Activated T-helper 1 cell treated with anti-CD3 and anti-CD28 coated beads, Interleukin-12 subunit alpha, Interleukin-12 subunit beta, Interleukin-2, Interleukin-4 antibody, amounts not matched to agents 30 ng/mL and 10 ng/mL and 1 ng/mL, durations not matched to agents 14 hours and 24 hours and 36 hours (primary cell): ENCODE measurements at regions of chr6 and their contacts with region 1.

Region 1: GRCh38 chr6:43174263-43175112 is 3.4 kb downstream of the SRF start:
- DNase-seq: peak; percentile 96
- H3K4me3 Mint-ChIP-seq: peak overlapping the region; percentile 94
- H3K27ac Mint-ChIP-seq: peak overlapping the region; percentile 82
- H3K4me1 Mint-ChIP-seq: peaks cover 44% of the 10 kb centered on the region
- H3K27me3 Mint-ChIP-seq: peaks cover 2% of the 10 kb centered on the region

Region 2: DNA sequence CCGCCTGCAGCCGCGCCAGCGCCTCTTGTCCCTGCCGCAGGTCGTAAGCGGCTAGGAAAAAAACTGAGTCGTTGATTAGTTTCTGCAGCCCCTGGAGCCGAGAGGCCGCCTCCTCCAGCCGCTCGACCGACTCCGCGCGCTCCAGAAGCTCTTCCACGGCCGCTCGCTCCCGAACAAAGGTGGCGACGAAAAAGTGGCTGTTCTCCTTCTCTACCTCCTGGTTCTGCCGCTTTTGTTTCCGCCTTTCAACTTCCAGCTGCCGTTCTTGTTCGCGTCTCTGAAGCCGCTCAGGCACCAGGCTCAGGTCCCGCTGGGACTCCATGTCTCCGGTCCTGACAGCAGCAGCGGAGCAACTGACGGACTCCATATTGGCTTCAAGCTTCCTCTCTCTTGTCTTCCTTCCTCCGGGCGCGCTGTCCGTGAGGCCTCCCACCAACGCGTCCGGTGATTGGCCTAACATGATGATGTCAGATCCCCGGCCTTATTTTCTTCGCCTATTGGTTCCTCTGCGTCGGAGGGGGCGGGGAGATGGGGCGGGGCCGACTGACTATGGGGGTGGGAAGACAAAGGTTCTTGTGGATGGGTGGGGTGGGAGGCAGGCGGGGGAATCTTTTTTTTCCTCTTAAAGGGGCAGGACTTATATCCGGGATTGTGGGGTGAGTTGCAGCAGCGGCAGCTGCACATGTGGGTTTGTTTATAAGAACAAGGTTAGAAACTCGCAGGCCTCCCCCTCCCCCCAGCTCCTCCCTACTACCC is 428.6 kb before region 1 on chr6 and contains the start of gene TBCC:
- intact Hi-C with region 1: loop called (anchors 1 kb)
- DNase-seq: peak; percentile 91
- H3K4me3 Mint-ChIP-seq: peak within 1 kb of the TSS; percentile 100
- H3K27ac Mint-ChIP-seq: peak within 1 kb of the TSS; percentile 100
- H3K4me1 Mint-ChIP-seq: peaks cover 32% of the 10 kb centered on the region
- H3K27me3 Mint-ChIP-seq: no peaks in the 10 kb centered on the region
- total RNA-seq, gene TBCC: 20.1 and 22.3 TPM in 2 replicates

Region 3: DNA sequence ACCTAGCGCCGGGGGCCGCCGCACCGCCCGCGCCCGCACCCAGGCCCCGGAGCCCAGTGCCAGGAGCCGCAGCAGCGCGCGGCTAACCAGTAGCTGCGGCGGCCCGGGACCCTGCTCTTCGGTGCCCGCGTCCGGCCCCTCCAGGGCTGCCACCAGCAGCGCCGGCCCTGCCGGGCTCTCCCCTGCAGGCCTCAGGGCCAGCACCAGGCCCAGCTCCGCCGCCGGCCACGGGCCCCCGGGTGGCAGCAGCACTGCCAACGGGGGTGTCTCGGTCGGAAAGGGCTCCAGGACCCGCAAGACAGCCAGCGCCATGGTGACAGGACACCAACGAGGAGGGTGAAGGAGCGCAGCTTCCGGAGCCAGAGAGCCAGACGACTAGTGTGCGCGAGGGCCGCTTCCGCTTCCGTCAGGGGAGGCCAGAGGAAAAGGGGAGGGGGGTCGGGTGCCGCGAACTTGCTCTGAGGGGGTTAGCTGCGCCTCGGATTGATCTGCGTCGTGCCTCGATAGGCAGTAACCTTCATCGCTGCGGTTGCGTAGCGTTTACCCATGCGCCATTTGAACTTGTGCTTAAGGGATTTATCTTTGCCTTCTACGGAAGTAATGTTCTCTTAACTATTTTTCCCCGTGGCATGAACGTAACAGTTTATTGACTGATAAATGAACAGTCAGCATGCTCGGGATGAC is 195.5 kb before region 1 on chr6 and contains the start of gene PEX6:
- intact Hi-C with region 1: loop called (anchors 1 kb)
- DNase-seq: peak; percentile 94
- H3K4me3 Mint-ChIP-seq: peak within 1 kb of the TSS; percentile 91
- H3K27ac Mint-ChIP-seq: peak within 1 kb of the TSS; percentile 96
- H3K4me1 Mint-ChIP-seq: peaks cover 38% of the 10 kb centered on the region
- H3K27me3 Mint-ChIP-seq: no peaks in the 10 kb centered on the region
- total RNA-seq, gene PEX6: 20.9 TPM in 2 replicates

Region 4: DNA sequence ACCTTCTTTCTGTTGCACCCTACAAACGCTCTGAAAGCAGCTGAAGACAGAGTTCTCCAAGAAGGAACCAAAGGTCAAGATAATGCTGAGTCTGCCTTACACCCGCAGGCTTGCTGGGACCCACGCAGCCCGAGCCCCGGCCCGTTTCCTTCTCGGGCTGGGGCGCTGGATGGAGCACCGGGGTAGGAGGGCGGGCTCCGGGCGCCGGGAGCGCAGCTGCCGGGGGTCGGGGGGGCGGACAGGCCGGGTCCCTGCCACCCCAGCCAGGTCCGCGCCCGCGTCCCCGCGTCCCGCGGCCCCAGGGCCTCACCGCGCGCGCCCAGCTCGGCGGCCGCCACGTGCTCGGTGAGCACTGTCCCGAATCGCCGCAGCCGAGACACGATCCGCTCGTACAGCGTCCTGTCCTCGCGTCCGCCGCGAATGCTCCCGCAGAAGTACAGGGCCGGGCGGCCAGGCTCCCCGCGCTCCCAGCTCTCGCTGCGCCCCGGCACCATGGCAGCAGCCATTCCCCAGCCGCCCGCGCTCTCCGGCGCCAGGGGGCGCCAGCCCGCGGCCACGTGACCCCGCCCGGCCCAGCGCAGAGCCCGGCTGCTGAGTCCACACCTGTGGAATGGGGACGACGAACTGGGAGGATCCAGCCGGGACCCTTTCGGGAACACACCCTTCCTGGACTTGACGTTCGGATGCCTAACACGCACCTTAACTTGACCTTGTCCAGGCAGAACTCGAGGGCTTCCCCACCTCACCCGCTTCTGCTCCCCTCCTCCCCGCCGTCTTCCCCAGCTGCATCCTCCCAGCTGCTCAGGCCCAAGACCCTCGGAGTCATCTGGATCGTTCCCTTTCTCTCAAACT is 54.7 kb after region 1 on chr6 and contains the start of gene DNPH1:
- intact Hi-C with region 1: loop called (anchors 1 kb)
- DNase-seq: peak; percentile 78
- H3K4me3 Mint-ChIP-seq: peak within 1 kb of the TSS; percentile 92
- H3K27ac Mint-ChIP-seq: peak within 1 kb of the TSS; percentile 89
- H3K4me1 Mint-ChIP-seq: peaks cover 47% of the 10 kb centered on the region
- H3K27me3 Mint-ChIP-seq: peaks cover 22% of the 10 kb centered on the region
- total RNA-seq, gene DNPH1: 65.8 and 71.6 TPM in 2 replicates

Region 5: GRCh38 chr6:43427406-43428111 is 253.1 kb after region 1 on chr6 and contains the start of gene ABCC10:
- intact Hi-C with region 1: loop called (anchors 1 kb)
- DNase-seq: peak; percentile 93
- H3K4me3 Mint-ChIP-seq: peak within 1 kb of the TSS; percentile 96
- H3K27ac Mint-ChIP-seq: peak within 1 kb of the TSS; percentile 96
- H3K4me1 Mint-ChIP-seq: peaks cover 17% of the 10 kb centered on the region
- H3K27me3 Mint-ChIP-seq: no peaks in the 10 kb centered on the region
- total RNA-seq, gene ABCC10: 40.5 and 43.6 TPM in 2 replicates

Region 6: DNA sequence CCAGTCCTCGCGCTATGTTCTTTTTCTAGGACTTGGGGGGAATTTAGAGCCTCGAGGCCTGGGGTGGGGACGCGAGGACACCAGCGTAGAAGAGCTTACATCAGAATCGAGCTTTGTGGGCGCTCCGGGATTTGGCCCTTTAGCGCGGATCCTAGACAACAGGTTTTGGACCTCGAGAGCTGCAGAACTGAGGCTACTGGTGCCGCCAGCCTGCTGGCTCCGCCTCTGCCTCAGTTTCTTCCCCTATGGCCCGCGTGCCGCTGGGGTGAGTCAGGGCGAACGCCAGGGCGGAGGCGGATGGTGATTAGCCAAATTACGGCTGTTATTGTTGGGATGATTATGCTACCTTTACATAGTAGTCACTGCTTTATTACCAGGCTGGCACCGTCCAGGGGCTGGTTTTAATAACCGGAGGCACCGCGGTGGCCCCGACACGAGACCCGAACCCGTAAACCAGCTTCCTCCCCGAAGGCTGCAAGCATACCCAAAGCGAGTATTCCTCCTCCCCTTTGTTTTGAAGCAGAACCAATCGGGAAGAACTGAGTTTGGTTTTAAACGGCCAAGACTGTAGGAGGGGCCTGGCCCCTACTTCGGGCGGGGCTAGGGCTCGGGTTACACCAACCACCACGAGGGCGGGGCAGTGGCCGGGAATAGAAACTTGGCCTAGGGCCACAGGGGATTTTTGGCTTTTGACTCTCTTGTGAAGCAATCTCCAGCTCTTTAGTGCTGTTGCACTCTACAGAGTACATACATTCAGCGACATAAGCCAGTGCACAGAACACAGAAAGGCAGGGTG is 455.2 kb after region 1 on chr6:
- intact Hi-C with region 1: loop called (anchors 1 kb)
- DNase-seq: peak; percentile 94
- H3K4me3 Mint-ChIP-seq: peak overlapping the region; percentile 99
- H3K27ac Mint-ChIP-seq: peak overlapping the region; percentile 95
- H3K4me1 Mint-ChIP-seq: peaks cover 44% of the 10 kb centered on the region
- H3K27me3 Mint-ChIP-seq: no peaks in the 10 kb centered on the region